HAP-1 (cell line): ENCODE measurements at regions of chr17 and their contacts with region 1.

Region 1: DNA sequence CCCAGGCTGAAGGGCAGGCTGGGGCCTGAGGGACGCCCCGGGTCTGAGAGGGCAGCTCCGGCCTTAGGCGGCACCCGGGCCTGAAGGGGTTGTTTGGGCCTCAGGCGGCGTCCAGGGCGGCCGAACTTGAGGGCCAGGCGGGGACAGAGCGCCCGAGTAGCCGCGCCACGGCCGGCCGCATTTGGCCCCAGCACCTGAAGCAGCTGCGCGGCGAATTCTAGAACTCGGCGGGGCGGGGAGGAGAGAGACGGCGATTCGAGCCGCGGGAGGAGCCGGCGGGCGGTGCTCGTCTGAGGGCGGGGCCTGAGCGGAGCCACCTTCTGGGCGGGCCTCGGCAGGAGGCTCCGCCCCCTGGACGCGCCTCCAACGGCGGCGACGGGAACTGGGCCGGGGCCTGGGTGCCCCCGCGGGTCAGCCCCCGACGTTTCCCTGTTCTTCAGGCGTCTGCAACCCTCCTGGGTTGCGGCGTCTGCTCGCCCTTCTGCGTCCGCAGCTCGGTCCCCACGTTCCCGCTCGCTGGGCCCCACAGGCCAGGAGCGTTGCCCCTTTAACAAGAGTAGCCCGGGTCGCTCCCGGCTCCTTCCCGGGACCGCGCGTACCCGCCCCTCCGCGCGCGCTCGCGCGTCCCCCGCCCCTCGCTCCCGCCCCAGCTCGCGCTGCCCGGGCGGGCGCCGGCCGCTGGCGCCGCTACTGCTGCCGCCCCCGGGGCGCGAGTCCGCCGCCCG is at the starts of genes INCA1 and KIF1C:
- DNase-seq: peak; percentile 82 to 95
- H3K4me3 ChIP-seq: peak within 1 kb of the TSS; percentile 82
- H3K4me1 ChIP-seq: peaks cover 6% of the 10 kb centered on the region
- H3K27me3 ChIP-seq: no peaks in the 10 kb centered on the region

Region 2: DNA sequence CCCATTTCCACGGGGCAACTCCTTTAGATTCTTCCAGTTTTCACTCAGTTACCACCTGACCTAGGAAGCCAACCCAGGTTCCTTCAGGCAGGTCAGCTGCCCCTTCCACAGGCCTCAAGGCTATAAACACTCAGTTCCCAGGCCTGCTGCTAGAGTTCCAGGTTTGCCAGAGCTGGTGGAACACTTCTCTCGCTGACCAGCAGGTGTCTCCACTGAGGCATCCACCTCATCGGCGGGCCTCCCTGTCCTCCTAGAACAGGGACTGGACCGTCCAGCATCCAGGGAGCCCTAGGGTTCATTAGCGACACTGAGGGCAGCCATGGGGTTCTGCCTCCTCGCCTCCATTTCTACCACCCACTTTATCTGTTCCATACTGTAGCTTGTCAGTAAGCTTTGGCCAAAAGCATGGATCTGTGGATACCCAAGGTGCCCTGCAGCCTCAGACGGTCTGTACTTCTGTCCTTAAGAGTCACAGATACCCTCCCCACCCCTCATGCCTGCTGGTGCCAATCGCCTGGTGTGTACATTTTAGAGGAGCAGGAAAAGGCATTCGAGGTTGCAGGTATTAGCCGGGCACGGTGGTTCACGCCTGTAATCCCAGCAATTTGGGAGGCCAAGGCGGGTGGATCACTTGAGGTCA is 1475.8 kb after region 1 on chr17:
- in situ Hi-C with region 1: loop called (anchors 25 kb)
- DNase-seq: peak; percentile 64 to 85
- H3K4me3 ChIP-seq: no peak overlapping the region
- H3K4me1 ChIP-seq: peaks cover 7% of the 10 kb centered on the region
- H3K27me3 ChIP-seq: no peaks in the 10 kb centered on the region